ENCODE measurements at regions of chr3 and their contacts with region 1.

Region 1: GRCh38 chr3:115077501-115078250 is 69.4 kb downstream of the ZBTB20 start:
- DNase-seq: no peak
- H3K4me3 ChIP-seq: no peak overlapping the region
- H3K27ac ChIP-seq: no peak overlapping the region
- H3K4me1 ChIP-seq: no peaks in the 10 kb centered on the region
- H3K27me3 ChIP-seq: no peaks in the 10 kb centered on the region

Region 2: GRCh38 chr3:114855839-114856238 is 221.8 kb before region 1 on chr3:
- CTCF ChIA-PET with region 1: no interaction called
- POLR2A ChIA-PET with region 1: no interaction called
- DNase-seq: no peak
- H3K4me3 ChIP-seq: no peak overlapping the region
- H3K27ac ChIP-seq: no peak overlapping the region
- H3K4me1 ChIP-seq: peaks cover 11 to 43% (median 26%) of the 10 kb centered on the region in 4 experiments
- H3K27me3 ChIP-seq: no peaks in the 10 kb centered on the region

Region 3: GRCh38 chr3:114928989-114929640 is 148.6 kb before region 1 on chr3:
- CTCF ChIA-PET with region 1: no interaction called
- POLR2A ChIA-PET with region 1: no interaction called
- DNase-seq: no peak
- H3K4me3 ChIP-seq: no peak overlapping the region
- H3K27ac ChIP-seq: no peak overlapping the region
- H3K4me1 ChIP-seq: peaks cover 14 to 36% (median 21%) of the 10 kb centered on the region in 4 experiments
- H3K27me3 ChIP-seq: no peaks in the 10 kb centered on the region

Region 4: DNA sequence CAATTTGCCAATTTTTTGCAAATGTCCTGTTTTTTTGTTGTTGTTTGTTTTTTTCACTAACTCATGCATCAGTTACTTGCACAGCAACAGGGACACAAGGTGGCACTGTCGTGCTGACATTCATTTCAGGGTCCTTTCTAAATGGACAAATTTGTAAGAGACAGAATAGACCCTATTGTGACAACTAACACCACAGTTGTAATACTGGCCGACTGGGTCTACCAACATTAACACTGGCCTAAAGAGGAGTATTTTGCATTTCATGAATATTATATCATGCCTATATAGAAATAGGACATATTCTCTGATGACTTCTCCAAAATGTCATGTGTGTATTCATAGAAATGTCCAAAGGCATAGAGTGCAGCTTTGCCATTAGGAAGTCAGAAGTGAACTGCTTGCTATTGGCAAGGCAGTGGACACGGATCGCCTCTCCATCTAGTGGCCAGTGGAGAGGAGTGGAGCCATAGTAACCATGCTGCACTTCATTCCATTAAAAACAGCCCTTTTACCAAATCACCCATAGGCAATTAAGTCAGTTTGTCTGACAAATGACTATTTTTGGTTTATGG is 14.6 kb after region 1 on chr3:
- CTCF ChIA-PET with region 1: interaction called, 21 read pairs
- POLR2A ChIA-PET with region 1: no interaction called
- DNase-seq: peak; percentile 84 to 86 (median 85)
- H3K4me3 ChIP-seq: no peak overlapping the region
- H3K27ac ChIP-seq: no peak overlapping the region
- H3K4me1 ChIP-seq: peaks cover 0 to 26% (median 5%) of the 10 kb centered on the region in 4 experiments
- H3K27me3 ChIP-seq: no peaks in the 10 kb centered on the region

Region 5: DNA sequence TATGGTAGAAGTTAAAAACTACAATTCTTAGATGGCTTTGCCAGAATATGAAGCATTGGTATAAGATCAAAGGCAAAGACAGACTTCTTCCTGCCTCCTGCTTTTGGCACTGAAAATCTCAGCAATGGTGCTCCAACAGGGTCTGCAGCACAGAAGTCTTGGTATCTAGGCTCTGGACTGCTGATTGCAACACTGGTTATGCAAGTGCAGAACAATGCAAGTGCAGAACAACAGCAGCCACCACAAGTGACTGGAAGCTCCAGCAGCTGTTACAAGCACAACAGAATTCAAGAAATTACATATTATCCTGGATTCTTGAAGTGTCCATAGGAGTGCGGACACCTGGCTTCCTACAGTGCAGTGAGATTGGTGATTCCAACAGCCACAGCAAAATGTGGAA is 35.7 kb after region 1 on chr3:
- CTCF ChIA-PET with region 1: no interaction called
- POLR2A ChIA-PET with region 1: no interaction called
- DNase-seq: no peak
- H3K4me3 ChIP-seq: no peak overlapping the region
- H3K27ac ChIP-seq: no peak overlapping the region
- H3K4me1 ChIP-seq: peaks cover 0 to 2% (median 0%) of the 10 kb centered on the region in 4 experiments
- H3K27me3 ChIP-seq: no peaks in the 10 kb centered on the region

Region 6: GRCh38 chr3:115134648-115135347 is 57.1 kb after region 1 on chr3:
- CTCF ChIA-PET with region 1: no interaction called
- POLR2A ChIA-PET with region 1: no interaction called
- DNase-seq: no peak
- H3K4me3 ChIP-seq: no peak overlapping the region
- H3K27ac ChIP-seq: no peak overlapping the region
- H3K4me1 ChIP-seq: no peaks in the 10 kb centered on the region
- H3K27me3 ChIP-seq: no peaks in the 10 kb centered on the region